ENCODE measurements at regions of chr16 and their contacts with region 1.

Region 1: DNA sequence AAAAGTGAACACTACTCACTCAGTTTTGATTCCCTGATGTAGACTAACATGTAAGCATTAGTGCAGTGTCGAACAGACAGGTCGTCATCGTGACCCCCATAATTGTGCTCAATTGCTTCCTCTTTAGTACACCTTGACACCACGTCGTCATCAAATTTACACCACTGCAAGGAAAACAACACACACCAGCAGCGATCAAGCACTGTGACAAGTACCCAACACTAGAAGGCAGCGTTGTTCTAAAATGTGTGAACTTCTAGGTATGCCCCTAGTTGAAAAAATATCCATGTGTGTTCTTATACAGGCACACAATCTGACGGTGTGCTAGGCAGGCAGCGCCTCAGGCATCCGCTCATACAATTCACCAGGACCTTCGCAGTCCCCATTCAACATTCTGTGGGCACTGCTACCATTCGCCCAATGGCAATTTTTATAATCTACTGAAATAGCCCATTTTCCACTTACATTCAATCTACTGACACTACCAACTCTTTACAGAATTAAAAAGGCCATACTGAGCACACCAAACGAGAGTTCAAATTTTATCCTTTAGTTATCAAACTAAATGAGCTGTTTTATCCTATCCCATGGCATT is 23.1 kb downstream of the LITAFD start:
- DNase-seq: no peak
- H3K4me3 ChIP-seq: no peak overlapping the region
- H3K27ac ChIP-seq: no peak overlapping the region
- H3K4me1 ChIP-seq: peaks cover 0 to 11% (median under 1%) of the 10 kb centered on the region in 4 donors
- H3K27me3 ChIP-seq: no peaks in the 10 kb centered on the region
- CTCF ChIP-seq: peak; percentile 14 to 42 (median 29)
- EP300 ChIP-seq: no peak
- POLR2A ChIP-seq: no peak

Region 2: GRCh38 chr16:9008601-9009260 is 103.5 kb after region 1 on chr16:
- in situ Hi-C with region 1: loop called in 2 of 4 experiments (anchors 10 kb)
- intact Hi-C with region 1: loop called (anchors 10 kb)
- DNase-seq: peak; percentile 86
- H3K4me3 ChIP-seq: peak overlapping the region; percentile 4 to 47 (median 20)
- H3K27ac ChIP-seq: peak overlapping the region in 3 of 4 donors; percentile 12 to 56 (median 14)
- H3K4me1 ChIP-seq: peaks cover 8 to 25% (median 17%) of the 10 kb centered on the region in 4 donors
- H3K27me3 ChIP-seq: no peaks in the 10 kb centered on the region
- CTCF ChIP-seq: peak; percentile 85 to 89 (median 87)
- EP300 ChIP-seq: no peak
- POLR2A ChIP-seq: no peak

Measured in transverse colon (tissue), 4 donors.